ENCODE measurements at regions of chr3 and their contacts with region 1.

Region 1: DNA sequence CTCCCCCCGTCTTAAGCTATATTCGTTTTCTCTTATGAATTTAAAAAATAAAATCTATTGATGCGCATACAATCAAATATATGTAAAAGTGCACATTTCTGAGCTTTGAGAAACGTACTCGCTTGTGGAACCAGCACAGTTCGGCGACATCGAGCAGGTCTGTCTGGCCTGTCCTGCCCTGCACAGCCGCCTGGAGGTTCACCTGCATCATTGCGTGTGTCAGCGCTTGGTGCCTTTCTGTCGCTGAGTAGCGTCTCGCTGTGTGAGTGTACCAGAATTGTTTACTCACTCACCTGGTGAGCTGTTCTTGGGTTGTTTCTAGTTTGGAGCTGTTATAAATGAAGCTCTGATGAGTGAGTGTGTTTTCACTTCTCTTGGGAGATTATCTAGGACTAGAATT is 104.0 kb downstream of the VGLL4 start:
- DNase-seq: peak; percentile 89
- ATAC-seq: peak; percentile 99
- H3K4me3 ChIP-seq: no peak overlapping the region
- H3K27ac ChIP-seq: no peak overlapping the region
- H3K4me1 ChIP-seq: peaks cover 12% of the 10 kb centered on the region
- H3K27me3 ChIP-seq: no peaks in the 10 kb centered on the region
- CTCF ChIP-seq: peak; percentile 80

Region 2: DNA sequence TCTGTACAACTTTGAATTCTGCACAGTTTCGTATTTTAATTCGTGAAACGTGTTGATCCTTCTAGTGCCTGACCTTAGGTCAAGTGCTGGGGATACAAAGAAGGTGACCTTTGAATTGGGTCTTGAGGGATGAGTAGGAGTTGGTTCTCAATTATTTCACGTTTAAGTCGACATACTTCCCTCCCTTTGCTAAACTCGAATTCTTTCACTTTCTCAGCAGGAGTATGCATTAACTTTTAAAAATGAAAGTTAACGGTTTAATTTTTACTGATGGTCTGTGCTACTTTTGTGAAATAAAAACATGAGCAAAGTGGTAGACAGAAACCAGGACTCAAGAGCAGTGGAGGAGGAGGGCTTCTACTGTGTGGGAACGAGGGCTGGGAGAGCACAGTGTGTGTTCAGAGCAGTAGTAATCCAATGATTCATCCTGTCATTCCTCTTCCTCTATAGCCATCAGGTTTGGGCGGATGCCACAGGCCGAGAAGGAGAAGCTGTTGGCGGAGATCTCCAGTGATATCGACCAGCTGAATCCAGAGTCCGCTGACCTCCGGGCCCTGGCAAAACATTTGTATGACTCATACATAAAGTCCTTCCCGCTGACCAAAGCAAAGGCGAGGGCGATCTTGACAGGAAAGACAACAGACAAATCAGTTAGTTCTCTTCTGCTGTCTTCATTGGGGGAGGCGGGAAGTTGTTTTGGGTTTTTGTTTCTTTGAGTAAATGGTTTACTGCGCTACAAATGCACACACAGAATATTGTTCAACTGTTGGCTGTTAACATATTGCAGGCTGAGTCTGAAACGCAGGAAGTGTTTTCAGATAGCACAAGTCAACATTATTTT is 866.0 kb after region 1 on chr3:
- CTCF ChIA-PET with region 1: interaction called, 12 read pairs
- POLR2A ChIA-PET with region 1: no interaction called
- intact Hi-C with region 1: no loop called
- DNase-seq: peak; percentile 98
- ATAC-seq: peak; percentile 94
- H3K4me3 ChIP-seq: 0 out of 2 replicates have a peak overlapping the region, but pooled peaks have one; percentile 15
- H3K27ac ChIP-seq: peak overlapping the region; percentile 92
- H3K4me1 ChIP-seq: peaks cover 59% of the 10 kb centered on the region
- H3K27me3 ChIP-seq: no peaks in the 10 kb centered on the region
- CTCF ChIP-seq: no peak